Activated CD4-positive, alpha-beta T cell treated with anti-CD3 and anti-CD28 coated beads, Interleukin-2, amount 10 ng/mL, durations not matched to agents 24 days and 14 days (primary cell): ENCODE measurements at regions of chr22 and their contacts with region 1.

Region 1: DNA sequence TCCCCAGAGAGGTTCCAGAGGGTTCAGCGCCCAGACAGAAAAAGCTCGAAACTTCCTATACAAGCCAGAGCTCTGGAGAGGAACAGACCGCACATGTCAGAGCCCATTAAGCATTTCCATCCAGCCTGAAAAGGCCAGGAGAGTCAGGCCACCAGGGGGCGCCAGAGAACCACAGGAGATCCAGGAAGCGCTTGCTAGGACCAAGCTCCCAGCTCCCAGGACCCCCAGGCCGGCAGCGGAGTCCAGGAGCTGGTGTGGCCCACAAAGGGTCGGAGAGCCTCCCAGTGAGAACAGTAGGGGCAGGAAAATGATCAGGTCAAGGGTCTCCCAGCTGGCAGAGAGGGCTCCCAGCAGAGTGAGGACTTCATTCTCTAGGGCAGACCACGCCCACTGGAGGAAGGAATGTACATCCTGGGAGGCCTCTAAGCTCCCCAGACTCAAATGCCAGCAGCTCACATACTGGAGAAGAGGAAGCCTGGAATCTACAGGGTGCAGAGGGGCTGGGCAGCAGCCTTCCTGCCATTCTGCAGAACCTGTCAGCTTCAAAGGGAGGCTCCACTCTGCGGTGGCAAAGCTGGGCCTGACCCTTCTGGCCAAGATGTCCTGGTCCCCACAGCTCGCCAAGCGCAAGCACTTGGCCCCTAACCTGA is 2.1 kb upstream of the MEI1 start:
- DNase-seq: peak; percentile 97
- H3K4me3 Mint-ChIP-seq: peak overlapping the region; percentile 34
- H3K27ac Mint-ChIP-seq: peak overlapping the region; percentile 70
- H3K4me1 Mint-ChIP-seq: peaks cover 15% of the 10 kb centered on the region
- H3K27me3 Mint-ChIP-seq: peaks cover 2% of the 10 kb centered on the region

Region 2: DNA sequence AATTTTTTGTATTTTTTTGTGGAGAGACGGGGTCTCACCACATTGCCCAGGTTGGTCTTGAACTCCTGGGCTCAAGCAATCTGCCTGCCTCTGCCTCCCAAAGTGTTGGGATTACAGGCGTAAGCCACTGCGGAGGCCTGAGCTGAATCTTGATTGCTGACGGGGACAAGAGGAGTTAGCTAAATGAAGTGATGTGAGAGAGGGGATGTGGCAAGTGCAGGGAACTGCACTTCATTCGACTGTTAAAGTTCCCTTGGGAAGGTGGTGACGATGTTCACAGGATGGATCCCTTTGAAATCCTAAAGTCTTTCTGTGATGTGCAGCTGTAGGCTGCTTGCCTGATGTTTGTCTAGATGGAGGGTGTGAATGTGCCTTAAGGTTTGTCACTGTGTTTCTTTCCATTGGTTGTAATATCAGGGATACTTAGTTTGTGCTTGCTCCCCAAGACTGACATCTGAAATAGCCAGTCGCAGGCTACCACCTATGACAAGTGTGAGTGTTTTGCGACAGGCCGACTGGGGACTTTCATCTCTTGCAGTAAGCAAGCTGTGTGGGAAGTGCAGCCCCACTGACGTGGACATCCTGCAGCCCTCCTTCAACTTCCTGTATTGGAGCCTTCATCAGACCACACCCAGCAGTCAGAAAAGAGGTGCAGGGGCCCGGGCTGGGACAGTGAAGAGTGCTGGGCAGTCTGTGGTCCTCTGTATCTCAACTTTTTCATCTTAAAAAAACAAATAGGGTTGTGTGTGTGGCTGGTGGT is 83.7 kb after region 1 on chr22:
- intact Hi-C with region 1: loop called (anchors 1 kb)
- DNase-seq: peak; percentile 97
- H3K4me3 Mint-ChIP-seq: peak overlapping the region; percentile 83
- H3K27ac Mint-ChIP-seq: peak overlapping the region; percentile 97
- H3K4me1 Mint-ChIP-seq: peaks cover 36% of the 10 kb centered on the region
- H3K27me3 Mint-ChIP-seq: no peaks in the 10 kb centered on the region

Region 3: DNA sequence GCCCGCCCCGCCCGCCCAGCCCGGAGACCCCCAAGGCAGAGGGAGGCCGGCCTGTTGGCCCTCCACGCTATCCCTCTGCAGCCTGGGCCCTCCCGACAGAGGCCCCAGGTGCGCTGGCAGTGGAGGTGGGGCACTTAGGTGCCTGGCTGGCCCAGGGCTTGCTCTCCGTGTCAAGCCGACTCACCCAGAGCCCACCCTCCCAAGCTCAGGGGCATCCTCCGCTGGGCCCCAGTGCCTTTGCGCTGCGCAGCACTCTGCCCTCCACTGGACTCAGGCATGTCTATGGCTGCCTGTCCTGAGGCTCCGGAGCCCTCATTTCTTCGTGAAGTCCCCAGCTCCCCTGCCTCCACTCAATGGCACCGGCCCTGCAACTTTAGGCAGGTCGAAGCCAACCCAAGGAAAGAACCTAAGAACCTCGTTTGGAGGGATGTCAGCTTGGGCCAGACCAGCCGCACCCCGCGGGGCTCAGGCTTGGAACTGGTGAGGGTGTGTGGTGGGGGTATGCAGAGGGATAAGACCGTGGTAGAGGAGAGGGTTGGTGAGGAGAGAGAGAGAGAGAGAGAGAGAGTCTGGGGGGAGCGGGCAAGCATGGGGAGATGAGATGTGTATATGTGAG is 260.8 kb after region 1 on chr22:
- intact Hi-C with region 1: loop called (anchors 1 kb)
- DNase-seq: no peak
- H3K4me3 Mint-ChIP-seq: no peak overlapping the region
- H3K27ac Mint-ChIP-seq: no peak overlapping the region
- H3K4me1 Mint-ChIP-seq: peaks cover 9% of the 10 kb centered on the region
- H3K27me3 Mint-ChIP-seq: no peaks in the 10 kb centered on the region